Heart left ventricle (tissue), 16 donors: ENCODE measurements at regions of chr18 and their contacts with region 1.

Region 1: DNA sequence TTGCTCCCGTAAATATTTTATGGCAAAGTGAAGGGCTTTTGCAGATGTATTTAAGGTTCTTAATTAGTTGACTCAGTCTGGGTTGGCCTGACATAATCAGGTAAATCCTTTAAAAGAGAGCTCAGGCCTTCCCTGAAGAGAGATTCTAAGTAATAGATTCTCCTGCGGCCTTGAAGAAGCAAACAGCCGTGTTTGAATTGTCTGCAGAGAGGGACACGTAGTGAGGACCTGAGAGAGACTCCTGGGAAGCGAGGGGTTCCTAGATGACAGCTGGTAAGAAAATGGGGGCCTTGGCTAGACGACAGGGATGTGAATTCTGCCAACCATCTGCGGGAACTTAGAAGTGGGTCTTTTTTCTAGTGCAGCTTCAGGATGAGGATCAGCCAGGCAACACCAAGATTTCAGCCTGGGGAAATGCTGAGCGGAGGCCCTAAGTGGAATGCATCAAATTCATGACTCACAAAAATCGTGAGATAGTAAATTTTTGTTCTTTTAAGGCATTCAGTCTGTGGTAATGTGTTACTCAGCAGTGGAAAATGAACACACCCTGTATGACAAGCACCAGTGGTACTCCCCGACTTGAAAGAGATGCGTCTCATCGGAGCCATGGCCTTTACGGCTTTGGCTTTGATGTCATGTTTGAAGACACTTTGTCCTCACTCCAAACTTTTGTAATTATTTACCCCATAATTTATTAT is 62.1 kb upstream of the SMIM21 start:
- DNase-seq: no peak
- ATAC-seq: peak in 3 of 4 donors; percentile 47 to 92 (median 70)
- H3K4me3 ChIP-seq: no peak overlapping the region
- H3K27ac ChIP-seq: no peak overlapping the region
- H3K4me1 ChIP-seq: no peaks in the 10 kb centered on the region
- H3K27me3 ChIP-seq: no peaks in the 10 kb centered on the region
- CTCF ChIP-seq: no peak
- POLR2A ChIP-seq: no peak

Region 2: GRCh38 chr18:74806700-74807416 is 682.8 kb before region 1 on chr18:
- intact Hi-C with region 1: no loop called
- DNase-seq: no peak
- ATAC-seq: peak in 3 of 4 donors; percentile 49 to 73 (median 72)
- H3K4me3 ChIP-seq: no peak overlapping the region
- H3K27ac ChIP-seq: peak overlapping the region in 1 of 12 donors; percentile 2
- H3K4me1 ChIP-seq: peaks cover 0 to 5% (median 0%) of the 10 kb centered on the region in 12 donors
- H3K27me3 ChIP-seq: no peaks in the 10 kb centered on the region
- CTCF ChIP-seq: no peak
- POLR2A ChIP-seq: no peak

Region 3: DNA sequence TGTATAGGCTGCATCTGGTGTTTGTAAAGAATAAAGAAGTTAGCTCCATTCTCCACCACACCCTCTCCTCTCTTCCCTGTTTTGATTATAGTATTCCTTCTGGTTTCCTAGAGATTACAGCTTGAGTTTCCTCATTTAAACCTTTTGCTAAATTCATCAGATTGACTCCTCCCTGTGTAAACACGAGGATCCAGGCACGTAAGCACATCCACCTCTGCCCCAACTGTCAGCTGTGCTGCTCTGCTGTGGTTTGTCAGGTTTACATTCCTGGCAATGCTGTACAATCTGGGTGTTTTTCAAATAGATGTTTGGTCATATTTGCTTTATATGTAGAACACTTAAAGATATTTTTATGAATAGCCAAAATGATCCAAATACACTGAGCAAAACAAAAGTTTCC is 583.5 kb before region 1 on chr18:
- intact Hi-C with region 1: loop called in 1 of 10 experiments (anchors 10 kb)
- DNase-seq: no peak
- ATAC-seq: no peak
- H3K4me3 ChIP-seq: no peak overlapping the region
- H3K27ac ChIP-seq: no peak overlapping the region
- H3K4me1 ChIP-seq: no peaks in the 10 kb centered on the region
- H3K27me3 ChIP-seq: no peaks in the 10 kb centered on the region
- CTCF ChIP-seq: no peak
- POLR2A ChIP-seq: no peak

Region 4: GRCh38 chr18:75125382-75126331 is 364.0 kb before region 1 on chr18:
- intact Hi-C with region 1: loop called in 1 of 10 experiments (anchors 10 kb)
- DNase-seq: no peak
- ATAC-seq: peak in 3 of 4 donors; percentile 44 to 51 (median 47)
- H3K4me3 ChIP-seq: peak overlapping the region in 5 of 12 donors; percentile 14 to 46 (median 26)
- H3K27ac ChIP-seq: no peak overlapping the region
- H3K4me1 ChIP-seq: no peaks in the 10 kb centered on the region
- H3K27me3 ChIP-seq: no peaks in the 10 kb centered on the region
- CTCF ChIP-seq: no peak
- POLR2A ChIP-seq: no peak

Region 5: GRCh38 chr18:75309564-75309963 is 180.1 kb before region 1 on chr18:
- intact Hi-C with region 1: no loop called
- DNase-seq: no peak
- ATAC-seq: no peak
- H3K4me3 ChIP-seq: no peak overlapping the region
- H3K27ac ChIP-seq: no peak overlapping the region
- H3K4me1 ChIP-seq: no peaks in the 10 kb centered on the region
- H3K27me3 ChIP-seq: no peaks in the 10 kb centered on the region
- CTCF ChIP-seq: no peak
- POLR2A ChIP-seq: no peak